ENCODE measurements at regions of chr19 and their contacts with region 1.

Region 1: GRCh38 chr19:13597640-13598039 is 91.4 kb upstream of the CACNA1A start:
- DNase-seq: peak; percentile 74
- ATAC-seq: peak; percentile 97
- H3K4me3 ChIP-seq: no peak overlapping the region
- H3K27ac ChIP-seq: no peak overlapping the region
- H3K4me1 ChIP-seq: no peaks in the 10 kb centered on the region
- H3K27me3 ChIP-seq: no peaks in the 10 kb centered on the region; the same call in 1 of the 2 replicates
- CTCF ChIP-seq: peak; percentile 83
- POLR2A ChIP-seq: 0 out of 2 replicates have a peak, but pooled peaks have one; percentile 40
- RAD21 ChIP-seq: peak; percentile 93

Region 2: DNA sequence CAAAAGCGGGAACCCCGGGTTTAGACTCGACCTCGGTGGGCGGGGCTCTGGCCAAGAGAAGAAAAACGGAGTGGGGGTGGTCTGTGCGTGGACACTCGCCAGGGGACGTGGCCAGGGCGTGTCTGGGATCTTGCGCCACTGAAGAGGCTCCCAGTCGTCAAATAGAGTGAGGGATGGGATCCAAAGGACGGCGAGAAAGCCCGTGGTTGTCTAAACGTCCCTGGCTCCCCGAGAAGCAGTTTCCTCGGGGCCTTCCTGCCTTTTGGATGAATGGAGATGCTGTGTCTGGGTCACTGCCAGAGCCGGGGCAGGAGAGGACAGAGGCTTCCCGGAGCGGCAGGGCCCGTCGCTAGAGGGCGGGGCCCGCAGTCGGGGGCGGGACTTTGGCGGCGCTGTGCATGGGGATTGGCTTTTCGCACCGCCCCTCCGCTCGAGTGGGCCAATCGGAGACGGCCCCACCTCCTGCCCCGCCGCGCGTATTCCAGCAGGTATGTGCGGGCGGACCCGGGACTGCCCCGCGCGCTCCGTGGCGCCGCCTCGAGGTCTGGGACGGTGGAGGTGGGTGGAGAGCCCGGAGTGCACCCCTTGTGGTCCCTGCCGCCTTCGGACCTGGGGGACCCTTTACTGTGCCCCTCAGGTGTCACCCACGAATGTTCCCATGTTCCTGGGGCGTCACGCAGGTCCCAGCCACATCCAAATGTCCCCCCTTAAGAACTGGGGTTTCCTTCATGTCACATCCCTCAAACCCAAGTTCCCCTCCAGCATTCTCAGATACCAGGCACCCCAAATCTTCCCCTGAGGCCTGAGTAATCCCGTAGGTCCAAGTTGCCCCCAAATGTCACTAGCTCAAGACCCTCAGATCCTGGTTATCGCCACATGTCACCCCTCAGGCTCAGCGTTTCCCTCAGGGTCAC is 235.9 kb after region 1 on chr19:
- CTCF ChIA-PET with region 1: no interaction called
- POLR2A ChIA-PET with region 1: no interaction called
- dilution Hi-C with region 1: no loop called
- in situ Hi-C with region 1: no loop called
- intact Hi-C with region 1: no loop called
- DNase-seq: peak; percentile 86
- ATAC-seq: peak; percentile 89
- H3K4me3 ChIP-seq: no peak overlapping the region
- H3K27ac ChIP-seq: peak overlapping the region; percentile 20
- H3K4me1 ChIP-seq: peaks cover 31% of the 10 kb centered on the region
- H3K27me3 ChIP-seq: no peaks in the 10 kb centered on the region
- CTCF ChIP-seq: peak; percentile 49
- POLR2A ChIP-seq: peak; percentile 78
- RAD21 ChIP-seq: no peak; the same call in 1 of the 2 replicates

Region 3: DNA sequence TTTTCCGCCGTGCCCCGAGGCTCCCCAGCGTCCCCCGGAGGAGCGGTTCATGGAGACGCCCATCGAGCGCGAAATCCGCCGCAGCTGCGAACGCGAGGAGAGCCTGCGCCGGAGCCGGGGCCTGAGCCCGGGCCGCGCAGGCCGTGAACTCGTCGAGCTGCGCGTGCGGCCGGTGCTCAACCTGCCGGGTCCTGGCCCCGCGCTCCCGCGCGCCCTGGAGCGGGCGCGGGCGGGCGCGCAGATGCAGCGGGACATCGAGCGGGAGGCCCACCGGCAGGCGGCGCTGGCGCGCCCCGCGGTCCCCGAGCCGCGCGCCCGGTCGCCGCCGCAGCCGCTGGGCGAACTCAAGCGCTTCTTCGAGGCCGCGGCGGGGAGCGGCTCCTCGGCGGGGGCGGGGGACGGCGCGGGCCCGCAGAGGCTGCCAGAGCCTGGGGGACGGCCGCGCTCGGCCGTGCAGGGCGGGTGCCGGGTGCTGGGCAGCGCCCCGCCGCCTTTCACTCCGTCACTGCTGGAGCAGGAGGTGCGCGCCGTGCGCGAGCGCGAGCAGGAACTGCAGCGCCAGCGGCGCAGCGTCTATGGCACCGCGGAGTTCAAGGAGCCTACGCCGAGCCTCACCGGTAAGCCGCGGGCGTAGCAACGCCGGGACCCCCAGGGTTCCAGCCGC is 475.8 kb after region 1 on chr19:
- CTCF ChIA-PET with region 1: no interaction called
- POLR2A ChIA-PET with region 1: no interaction called
- dilution Hi-C with region 1: no loop called
- in situ Hi-C with region 1: no loop called
- intact Hi-C with region 1: loop called (anchors 2 kb)
- DNase-seq: peak; percentile 82
- ATAC-seq: peak; percentile 79
- H3K4me3 ChIP-seq: peak overlapping the region; percentile 61
- H3K27ac ChIP-seq: peak overlapping the region; percentile 13; the same call in 1 of the 2 replicates
- H3K4me1 ChIP-seq: peaks cover 10% of the 10 kb centered on the region
- H3K27me3 ChIP-seq: peaks cover 2% of the 10 kb centered on the region; the same call in 1 of the 2 replicates
- CTCF ChIP-seq: peak; percentile 66
- POLR2A ChIP-seq: no peak
- RAD21 ChIP-seq: peak; percentile 29